ENCODE measurements at regions of chr14 and their contacts with region 1.

Region 1: GRCh38 chr14:66662374-66662773 is 154.4 kb downstream of the GPHN start:
- DNase-seq: peak; percentile 25
- H3K4me3 ChIP-seq: no peak overlapping the region
- H3K27ac ChIP-seq: no peak overlapping the region
- H3K4me1 ChIP-seq: no peaks in the 10 kb centered on the region
- H3K27me3 ChIP-seq: no peaks in the 10 kb centered on the region
- CTCF ChIP-seq: peak; percentile 58

Region 2: GRCh38 chr14:66495218-66496098 is 166.9 kb before region 1 on chr14:
- CTCF ChIA-PET with region 1: no interaction called
- POLR2A ChIA-PET with region 1: no interaction called
- intact Hi-C with region 1: loop called (anchors 5 kb)
- DNase-seq: peak; percentile 71
- H3K4me3 ChIP-seq: no peak overlapping the region
- H3K27ac ChIP-seq: no peak overlapping the region
- H3K4me1 ChIP-seq: peaks cover 9% of the 10 kb centered on the region
- H3K27me3 ChIP-seq: no peaks in the 10 kb centered on the region
- CTCF ChIP-seq: peak; percentile 88